Naive thymus-derived CD4-positive, alpha-beta T cell (primary cell): ENCODE measurements at regions of chr14 and their contacts with region 1.

Region 1: GRCh38 chr14:90399541-90400444 is 3.0 kb downstream of the CALM1 start:
- DNase-seq: peak; percentile 60 to 89 (median 85)
- ATAC-seq: peak; percentile 69
- H3K4me3 ChIP-seq: peak overlapping the region; percentile 78
- H3K4me3 Mint-ChIP-seq: peak overlapping the region; percentile 91 to 100 (median 98)
- H3K27ac ChIP-seq: peak overlapping the region; percentile 92
- H3K27ac Mint-ChIP-seq: peak overlapping the region; percentile 38 to 100 (median 99)
- H3K4me1 ChIP-seq: peaks cover 49 to 50% of the 10 kb centered on the region in 2 donors
- H3K4me1 Mint-ChIP-seq: peaks cover 45 to 70% (median 62%) of the 10 kb centered on the region in 7 donors
- H3K27me3 ChIP-seq: no peaks in the 10 kb centered on the region
- H3K27me3 Mint-ChIP-seq: peaks cover 0 to 7% (median 0%) of the 10 kb centered on the region in 5 donors

Region 2: DNA sequence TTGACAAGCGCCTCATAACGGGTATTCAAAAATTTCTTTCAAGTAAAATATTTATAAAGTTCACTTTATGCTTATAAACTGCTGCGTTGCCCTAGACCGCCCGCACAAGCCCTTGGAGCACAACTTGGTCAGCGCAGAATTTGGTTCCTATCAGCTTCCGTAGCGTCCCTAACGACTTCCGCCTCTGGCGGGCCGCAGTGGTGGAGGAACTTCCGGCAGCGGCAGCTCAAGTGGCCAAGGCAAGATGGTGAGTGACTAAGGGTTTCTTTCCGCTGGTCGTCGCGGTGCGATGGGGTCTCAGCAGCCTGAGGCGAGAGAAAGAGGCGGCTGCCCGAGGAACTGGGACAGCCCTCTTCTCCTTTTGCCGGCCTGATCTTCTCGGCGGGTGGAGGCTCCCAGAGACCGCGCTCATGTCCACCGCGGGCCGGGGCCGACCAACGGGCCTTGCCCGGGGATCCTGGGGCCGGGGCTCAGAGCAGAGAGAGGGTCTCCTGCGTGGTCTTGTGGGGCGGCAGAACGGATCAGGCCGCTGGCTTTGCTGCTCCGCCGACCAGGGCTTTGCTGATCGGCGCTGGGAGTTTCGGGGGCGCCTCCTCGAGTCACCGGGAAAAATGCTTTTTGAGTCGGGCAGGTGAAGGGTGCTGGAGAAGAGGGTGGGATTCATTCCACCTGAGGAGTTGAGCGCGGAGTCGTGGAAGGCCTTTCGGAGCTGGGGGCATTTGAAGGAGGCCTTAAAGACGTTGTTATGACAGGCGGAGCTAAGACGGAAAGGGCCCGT is 143.2 kb before region 1 on chr14 and contains the start of gene PSMC1:
- CTCF ChIA-PET with region 1: no interaction called
- POLR2A ChIA-PET with region 1: no interaction called
- intact Hi-C with region 1: loop called (anchors 2 to 5 kb)
- DNase-seq: peak; percentile 51 to 89 (median 85)
- ATAC-seq: peak; percentile 97
- H3K4me3 ChIP-seq: peak within 1 kb of the TSS; percentile 87
- H3K4me3 Mint-ChIP-seq: peak within 1 kb of the TSS; percentile 86 to 99 (median 96)
- H3K27ac ChIP-seq: peak within 1 kb of the TSS; percentile 86
- H3K27ac Mint-ChIP-seq: peak within 1 kb of the TSS; percentile 90 to 98 (median 96)
- H3K4me1 ChIP-seq: peaks cover 13 to 17% of the 10 kb centered on the region in 2 donors
- H3K4me1 Mint-ChIP-seq: peaks cover 12 to 39% (median 34%) of the 10 kb centered on the region in 7 donors
- H3K27me3 ChIP-seq: no peaks in the 10 kb centered on the region
- H3K27me3 Mint-ChIP-seq: peaks cover 0 to 10% (median 7%) of the 10 kb centered on the region in 5 donors
- total RNA-seq, gene PSMC1: 47.9 to 101 (median 58.2) TPM

Region 3: GRCh38 chr14:90331497-90332435 is 68.0 kb before region 1 on chr14 and contains the start of gene NRDE2:
- CTCF ChIA-PET with region 1: no interaction called
- POLR2A ChIA-PET with region 1: interaction called, 15 read pairs
- intact Hi-C with region 1: loop called (anchors 1 kb)
- DNase-seq: peak; percentile 74 to 95 (median 85)
- ATAC-seq: peak; percentile 99
- H3K4me3 ChIP-seq: peak within 1 kb of the TSS; percentile 91
- H3K4me3 Mint-ChIP-seq: peak within 1 kb of the TSS; percentile 90 to 95 (median 93)
- H3K27ac ChIP-seq: peak within 1 kb of the TSS; percentile 72
- H3K27ac Mint-ChIP-seq: peak within 1 kb of the TSS; percentile 86 to 97 (median 92)
- H3K4me1 ChIP-seq: peaks cover 0 to 9% of the 10 kb centered on the region in 2 donors
- H3K4me1 Mint-ChIP-seq: peaks cover 14 to 44% (median 38%) of the 10 kb centered on the region in 7 donors
- H3K27me3 ChIP-seq: no peaks in the 10 kb centered on the region
- H3K27me3 Mint-ChIP-seq: peaks cover 7 to 25% (median 9%) of the 10 kb centered on the region in 5 donors
- total RNA-seq, gene NRDE2: 23.6 to 30.2 (median 28.7) TPM

Region 4: GRCh38 chr14:90375934-90376333 is 23.9 kb before region 1 on chr14:
- CTCF ChIA-PET with region 1: interaction called, 14 read pairs
- POLR2A ChIA-PET with region 1: interaction called, 470 read pairs
- intact Hi-C with region 1: no loop called
- DNase-seq: no peak
- ATAC-seq: no peak
- H3K4me3 ChIP-seq: no peak overlapping the region
- H3K4me3 Mint-ChIP-seq: no peak overlapping the region
- H3K27ac ChIP-seq: no peak overlapping the region
- H3K27ac Mint-ChIP-seq: no peak overlapping the region
- H3K4me1 ChIP-seq: no peaks in the 10 kb centered on the region
- H3K4me1 Mint-ChIP-seq: peaks cover 0 to 16% (median 9%) of the 10 kb centered on the region in 7 donors
- H3K27me3 ChIP-seq: no peaks in the 10 kb centered on the region
- H3K27me3 Mint-ChIP-seq: peaks cover 0 to 15% (median 0%) of the 10 kb centered on the region in 5 donors

Region 5: DNA sequence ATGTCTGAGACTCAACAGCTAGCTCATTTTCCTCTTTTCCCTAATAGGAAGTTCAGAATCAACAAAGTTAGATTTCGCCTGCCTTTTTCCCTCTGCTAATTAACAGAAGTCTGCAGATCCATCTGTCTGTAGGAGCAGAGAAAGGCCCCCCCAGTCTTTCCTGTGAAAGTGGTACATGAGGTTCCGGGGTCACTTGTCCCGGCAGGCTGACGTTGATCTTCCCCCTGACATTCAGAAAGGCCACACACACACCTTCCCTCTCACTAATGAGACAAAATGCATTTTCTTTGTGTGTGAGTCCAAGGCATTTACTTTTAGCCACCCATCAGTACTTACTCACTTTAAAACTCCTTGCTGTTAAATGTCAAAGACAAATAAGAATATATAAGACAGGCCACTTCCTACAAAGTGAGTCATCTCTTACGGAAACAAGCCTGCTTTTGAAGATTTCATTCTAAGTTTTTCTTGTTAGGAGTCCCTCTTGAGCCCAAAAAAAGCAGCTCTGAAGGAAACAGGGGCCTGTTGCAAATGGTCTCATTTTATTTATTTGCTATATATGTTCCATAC is 277.8 kb after region 1 on chr14:
- CTCF ChIA-PET with region 1: no interaction called
- POLR2A ChIA-PET with region 1: no interaction called
- intact Hi-C with region 1: loop called in 1 of 2 experiments (anchors 1 kb)
- DNase-seq: peak in 5 of 9 donors; percentile 15 to 33 (median 23)
- ATAC-seq: peak; percentile 44
- H3K4me3 ChIP-seq: no peak overlapping the region
- H3K4me3 Mint-ChIP-seq: peak overlapping the region; percentile 30 to 75 (median 62)
- H3K27ac ChIP-seq: no peak overlapping the region
- H3K27ac Mint-ChIP-seq: peak overlapping the region; percentile 56 to 90 (median 79)
- H3K4me1 ChIP-seq: peaks cover 0 to 23% of the 10 kb centered on the region in 2 donors
- H3K4me1 Mint-ChIP-seq: peaks cover 17 to 37% (median 30%) of the 10 kb centered on the region in 7 donors
- H3K27me3 ChIP-seq: no peaks in the 10 kb centered on the region
- H3K27me3 Mint-ChIP-seq: no peaks in the 10 kb centered on the region

Region 6: GRCh38 chr14:90758028-90758889 is 358.5 kb after region 1 on chr14:
- CTCF ChIA-PET with region 1: interaction called, 5 read pairs
- POLR2A ChIA-PET with region 1: interaction called, 14 read pairs
- intact Hi-C with region 1: loop called in 1 of 2 experiments (anchors 1 kb)
- DNase-seq: peak; percentile 83 to 98 (median 92)
- ATAC-seq: peak; percentile 94
- H3K4me3 ChIP-seq: peak overlapping the region; percentile 79
- H3K4me3 Mint-ChIP-seq: peak overlapping the region; percentile 75 to 92 (median 86)
- H3K27ac ChIP-seq: peak overlapping the region; percentile 75
- H3K27ac Mint-ChIP-seq: peak overlapping the region; percentile 80 to 95 (median 90)
- H3K4me1 ChIP-seq: peaks cover 7 to 21% of the 10 kb centered on the region in 2 donors
- H3K4me1 Mint-ChIP-seq: peaks cover 12 to 29% (median 23%) of the 10 kb centered on the region in 7 donors
- H3K27me3 ChIP-seq: no peaks in the 10 kb centered on the region
- H3K27me3 Mint-ChIP-seq: peaks cover 0 to 33% (median 6%) of the 10 kb centered on the region in 5 donors

Region 7: DNA sequence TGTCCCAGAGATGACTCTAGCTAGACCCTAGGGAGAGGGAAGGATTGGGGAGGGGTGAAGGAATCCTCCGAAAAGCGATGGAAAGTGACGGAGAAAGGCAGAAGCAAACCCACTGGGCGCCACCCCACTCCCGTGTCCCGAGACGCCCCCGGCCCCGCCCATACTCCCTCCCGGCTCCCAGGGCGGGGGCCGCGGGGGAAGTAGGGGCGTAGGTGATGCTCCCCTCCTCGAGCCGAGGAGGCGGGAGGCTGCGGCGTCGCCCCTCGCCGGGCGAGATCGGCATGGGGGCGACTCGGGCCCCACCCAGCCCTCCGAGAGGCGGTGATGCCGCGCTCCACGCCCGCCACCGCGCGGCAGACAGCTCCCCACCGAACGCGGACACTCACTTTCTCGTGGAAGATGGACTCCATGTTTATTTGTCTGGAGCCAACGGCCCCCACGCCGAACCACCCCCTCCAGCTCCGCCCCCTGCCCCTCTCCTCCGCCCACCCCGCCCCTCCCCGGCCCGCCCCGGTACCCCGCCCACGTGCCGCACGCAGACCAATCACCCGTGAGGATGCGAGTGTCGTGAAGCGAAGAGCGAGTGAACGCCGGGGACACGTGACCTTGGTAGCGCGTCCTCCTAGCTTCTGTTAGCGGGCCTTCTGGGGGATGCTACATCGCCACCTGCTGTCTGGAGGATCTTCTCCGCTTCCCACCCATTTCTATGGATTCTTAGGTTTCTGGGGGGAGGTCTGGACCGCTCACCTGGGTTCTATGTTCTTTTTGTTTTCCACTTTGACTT is 1706.5 kb after region 1 on chr14 and contains the start of gene ATXN3:
- CTCF ChIA-PET with region 1: no interaction called
- POLR2A ChIA-PET with region 1: no interaction called
- intact Hi-C with region 1: loop called in 1 of 2 experiments (anchors 5 kb)
- DNase-seq: peak; percentile 75 to 97 (median 93)
- ATAC-seq: peak; percentile 95
- H3K4me3 ChIP-seq: peak within 1 kb of the TSS; percentile 82
- H3K4me3 Mint-ChIP-seq: peak within 1 kb of the TSS; percentile 88 to 100 (median 98)
- H3K27ac ChIP-seq: peak within 1 kb of the TSS; percentile 91
- H3K27ac Mint-ChIP-seq: peak within 1 kb of the TSS; percentile 82 to 96 (median 92)
- H3K4me1 ChIP-seq: peaks cover 5 to 17% of the 10 kb centered on the region in 2 donors
- H3K4me1 Mint-ChIP-seq: peaks cover 39 to 72% (median 61%) of the 10 kb centered on the region in 7 donors
- H3K27me3 ChIP-seq: no peaks in the 10 kb centered on the region
- H3K27me3 Mint-ChIP-seq: no peaks in the 10 kb centered on the region
- total RNA-seq, gene ATXN3: 27.8 to 54.9 (median 36.9) TPM